Esophagus muscularis mucosa (tissue), 4 donors: ENCODE measurements at regions of chr12 and their contacts with region 1.

Region 1: GRCh38 chr12:58920102-58920960 is at the start of gene LRIG3:
- DNase-seq: peak; percentile 96
- H3K4me3 ChIP-seq: peak within 1 kb of the TSS; percentile 84 to 95 (median 90)
- H3K27ac ChIP-seq: peak within 1 kb of the TSS; percentile 97 to 99 (median 97)
- H3K4me1 ChIP-seq: peaks cover 23 to 30% (median 27%) of the 10 kb centered on the region in 4 donors
- H3K27me3 ChIP-seq: no peaks in the 10 kb centered on the region
- CTCF ChIP-seq: peak; percentile 8 to 19 (median 13)
- EP300 ChIP-seq: no peak
- POLR2A ChIP-seq: peak; percentile 5
- total RNA-seq, gene LRIG3: 42.4 to 56.5 (median 50.4) TPM

Region 2: GRCh38 chr12:58529897-58530741 is 390.2 kb before region 1 on chr12:
- intact Hi-C with region 1: loop called (anchors 10 kb)
- DNase-seq: no peak
- H3K4me3 ChIP-seq: no peak overlapping the region
- H3K27ac ChIP-seq: peak overlapping the region; percentile 0 to 52 (median 20)
- H3K4me1 ChIP-seq: peaks cover 0 to 25% (median 21%) of the 10 kb centered on the region in 4 donors
- H3K27me3 ChIP-seq: no peaks in the 10 kb centered on the region
- CTCF ChIP-seq: no peak
- EP300 ChIP-seq: no peak
- POLR2A ChIP-seq: no peak

Region 3: DNA sequence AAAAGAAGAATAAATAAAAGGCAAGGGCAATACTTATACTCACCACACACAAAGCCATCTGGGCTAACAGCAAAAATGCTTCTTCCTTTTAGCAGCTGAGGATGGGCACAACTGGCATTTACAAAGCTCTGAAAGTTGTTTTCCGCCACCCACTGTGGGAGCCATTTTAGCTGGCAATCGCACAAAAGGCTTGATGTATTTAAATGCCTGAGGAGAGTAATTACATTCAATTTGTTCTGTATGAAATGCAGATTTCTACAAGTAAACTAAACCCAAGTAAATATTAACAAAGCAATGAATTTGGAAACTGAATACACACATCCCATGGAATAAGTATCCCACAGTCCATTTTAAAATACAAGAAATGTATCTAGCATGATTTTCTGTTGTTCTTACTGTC is 37.5 kb before region 1 on chr12:
- intact Hi-C with region 1: loop called (anchors 5 kb)
- DNase-seq: no peak
- H3K4me3 ChIP-seq: no peak overlapping the region
- H3K27ac ChIP-seq: peak overlapping the region; percentile 19 to 40 (median 31)
- H3K4me1 ChIP-seq: peaks cover 0 to 55% (median 49%) of the 10 kb centered on the region in 4 donors
- H3K27me3 ChIP-seq: no peaks in the 10 kb centered on the region
- CTCF ChIP-seq: no peak
- EP300 ChIP-seq: no peak
- POLR2A ChIP-seq: no peak

Region 4: GRCh38 chr12:59041241-59042121 is 121.2 kb after region 1 on chr12:
- intact Hi-C with region 1: loop called (anchors 5 kb)
- DNase-seq: no peak
- H3K4me3 ChIP-seq: peak overlapping the region in 2 of 4 donors; percentile 15 to 17
- H3K27ac ChIP-seq: peak overlapping the region; percentile 68 to 85 (median 72)
- H3K4me1 ChIP-seq: peaks cover 0 to 29% (median 24%) of the 10 kb centered on the region in 4 donors
- H3K27me3 ChIP-seq: no peaks in the 10 kb centered on the region
- CTCF ChIP-seq: no peak
- EP300 ChIP-seq: no peak
- POLR2A ChIP-seq: no peak

Region 5: GRCh38 chr12:59087077-59087673 is 166.8 kb after region 1 on chr12:
- intact Hi-C with region 1: loop called (anchors 2 kb)
- DNase-seq: no peak
- H3K4me3 ChIP-seq: no peak overlapping the region
- H3K27ac ChIP-seq: no peak overlapping the region
- H3K4me1 ChIP-seq: peaks cover 0 to 44% (median 41%) of the 10 kb centered on the region in 4 donors
- H3K27me3 ChIP-seq: no peaks in the 10 kb centered on the region
- CTCF ChIP-seq: peak; percentile 54 to 71 (median 59)
- EP300 ChIP-seq: no peak
- POLR2A ChIP-seq: no peak